ENCODE measurements at regions of chr2 and their contacts with region 1.

Region 1: GRCh38 chr2:68121873-68122679 is 35.6 kb upstream of the PNO1 start:
- DNase-seq: peak; percentile 71 to 98 (median 91)

Region 2: DNA sequence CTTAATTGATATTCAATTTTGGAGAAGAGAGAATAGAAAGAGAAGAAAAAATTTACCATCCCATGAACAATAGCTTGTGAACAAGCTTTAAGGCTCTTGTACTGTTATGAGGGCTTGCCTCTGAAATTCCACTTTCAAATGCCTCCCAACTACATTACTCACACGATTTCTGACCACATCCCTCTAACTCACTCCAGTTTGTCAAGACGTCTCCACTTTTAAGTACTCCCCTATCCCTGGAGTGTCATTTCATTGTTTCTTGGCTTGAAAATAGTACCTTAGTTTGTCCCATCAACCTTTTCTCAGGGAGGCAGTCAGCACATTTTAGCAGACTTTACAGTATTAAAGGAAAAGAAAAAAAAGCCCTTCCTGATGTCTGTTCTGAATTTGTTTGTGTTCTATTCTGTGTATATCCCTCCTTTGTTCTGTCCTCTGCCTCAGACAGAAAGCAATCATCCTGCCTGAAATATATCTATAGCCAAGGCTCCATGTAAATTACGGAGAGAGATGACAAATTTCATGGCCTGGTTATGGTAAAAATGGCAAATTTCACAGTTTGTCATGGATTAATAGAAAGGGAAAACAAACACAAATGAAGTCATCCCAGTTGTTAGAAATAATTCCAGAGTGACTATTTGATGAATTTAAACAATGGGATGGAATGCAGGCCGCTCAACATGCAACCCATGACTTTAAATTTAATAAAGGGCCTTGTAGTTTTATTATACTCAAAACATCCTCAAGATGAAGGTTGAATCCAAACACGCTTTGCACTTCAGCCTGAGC is 496.2 kb before region 1 on chr2:
- intact Hi-C with region 1: no loop called
- DNase-seq: no peak

Region 3: GRCh38 chr2:68225119-68225632 is 103.1 kb after region 1 on chr2:
- intact Hi-C with region 1: no loop called
- DNase-seq: peak in 1 of 10 donors; percentile 9

Region 4: GRCh38 chr2:68282811-68283418 is 160.8 kb after region 1 on chr2:
- intact Hi-C with region 1: loop called (anchors 1 kb)
- DNase-seq: no peak